ENCODE measurements at regions of chr1 and their contacts with region 1.

Region 1: GRCh38 chr1:83692524-83693381 is 306.2 kb downstream of the TTLL7 start:
- DNase-seq: no peak
- H3K4me3 ChIP-seq: peak overlapping the region; percentile 27 to 58 (median 40)
- H3K27ac ChIP-seq: no peak overlapping the region
- H3K4me1 ChIP-seq: no peaks in the 10 kb centered on the region
- H3K27me3 ChIP-seq: no peaks in the 10 kb centered on the region
- CTCF ChIP-seq: no peak
- POLR2A ChIP-seq: no peak

Region 2: GRCh38 chr1:83673312-83673711 is 19.4 kb before region 1 on chr1:
- intact Hi-C with region 1: loop called (anchors 1 kb)
- DNase-seq: no peak
- H3K4me3 ChIP-seq: no peak overlapping the region
- H3K27ac ChIP-seq: no peak overlapping the region
- H3K4me1 ChIP-seq: no peaks in the 10 kb centered on the region
- H3K27me3 ChIP-seq: no peaks in the 10 kb centered on the region
- CTCF ChIP-seq: no peak
- POLR2A ChIP-seq: no peak

Region 3: GRCh38 chr1:83705091-83705490 is 12.3 kb after region 1 on chr1:
- intact Hi-C with region 1: no loop called
- DNase-seq: no peak
- H3K4me3 ChIP-seq: no peak overlapping the region
- H3K27ac ChIP-seq: no peak overlapping the region
- H3K4me1 ChIP-seq: no peaks in the 10 kb centered on the region
- H3K27me3 ChIP-seq: no peaks in the 10 kb centered on the region
- CTCF ChIP-seq: no peak
- POLR2A ChIP-seq: no peak

Measured in breast epithelium (tissue), 4 donors.